WTC11 (cell line): ENCODE measurements at regions of chr5 and their contacts with region 1.

Region 1: GRCh38 chr5:1467768-1468534 is 22.7 kb upstream of the SLC6A3 start:
- DNase-seq: peak; percentile 80
- ATAC-seq: peak; percentile 69
- H3K4me3 Mint-ChIP-seq: no peak overlapping the region
- H3K27ac Mint-ChIP-seq: peak overlapping the region; percentile 91
- H3K4me1 Mint-ChIP-seq: no peaks in the 10 kb centered on the region; the same call in 1 of the 2 replicates
- H3K27me3 Mint-ChIP-seq: no peaks in the 10 kb centered on the region
- CTCF ChIP-seq: peak; percentile 52; the same call in 1 of the 2 replicates

Region 2: GRCh38 chr5:1385395-1386273 is 82.3 kb before region 1 on chr5:
- CTCF ChIA-PET with region 1: interaction called, 27 read pairs
- POLR2A ChIA-PET with region 1: no interaction called
- DNase-seq: peak; percentile 89
- ATAC-seq: peak; percentile 98
- H3K4me3 Mint-ChIP-seq: peak overlapping the region; percentile 86
- H3K27ac Mint-ChIP-seq: peak overlapping the region; percentile 80; the same call in 1 of the 2 replicates
- H3K4me1 Mint-ChIP-seq: peaks cover 15% of the 10 kb centered on the region
- H3K27me3 Mint-ChIP-seq: peaks cover 67% of the 10 kb centered on the region
- CTCF ChIP-seq: no peak

Region 3: GRCh38 chr5:1409381-1410110 is 58.4 kb before region 1 on chr5:
- CTCF ChIA-PET with region 1: interaction called, 12 read pairs
- POLR2A ChIA-PET with region 1: no interaction called
- DNase-seq: peak; percentile 74
- ATAC-seq: peak; percentile 60
- H3K4me3 Mint-ChIP-seq: no peak overlapping the region
- H3K27ac Mint-ChIP-seq: no peak overlapping the region; the same call in 1 of the 2 replicates
- H3K4me1 Mint-ChIP-seq: peaks cover 10% of the 10 kb centered on the region
- H3K27me3 Mint-ChIP-seq: no peaks in the 10 kb centered on the region
- CTCF ChIP-seq: no peak

Region 4: DNA sequence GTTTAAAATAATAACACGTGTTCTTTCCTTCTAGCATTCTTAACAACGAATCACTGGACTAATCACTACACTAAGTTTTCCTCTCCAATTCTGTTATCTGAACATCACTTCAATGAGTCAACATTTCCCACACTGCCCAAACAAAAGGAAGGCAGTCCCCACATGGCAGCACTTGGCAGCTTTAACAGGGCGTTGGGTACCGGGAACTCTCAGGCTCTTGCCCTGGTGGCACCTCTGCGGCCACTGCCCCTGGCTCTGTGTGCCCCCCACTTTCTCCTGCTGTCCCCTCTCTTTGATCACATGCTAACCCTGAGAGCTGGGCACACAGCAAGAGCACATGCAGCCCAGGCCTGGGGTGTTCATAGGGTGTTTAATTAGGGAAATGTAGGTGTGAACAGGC is 38.5 kb before region 1 on chr5:
- CTCF ChIA-PET with region 1: no interaction called
- POLR2A ChIA-PET with region 1: no interaction called
- DNase-seq: no peak
- ATAC-seq: no peak
- H3K4me3 Mint-ChIP-seq: no peak overlapping the region
- H3K27ac Mint-ChIP-seq: no peak overlapping the region
- H3K4me1 Mint-ChIP-seq: no peaks in the 10 kb centered on the region
- H3K27me3 Mint-ChIP-seq: peaks cover 18% of the 10 kb centered on the region
- CTCF ChIP-seq: no peak

Region 5: DNA sequence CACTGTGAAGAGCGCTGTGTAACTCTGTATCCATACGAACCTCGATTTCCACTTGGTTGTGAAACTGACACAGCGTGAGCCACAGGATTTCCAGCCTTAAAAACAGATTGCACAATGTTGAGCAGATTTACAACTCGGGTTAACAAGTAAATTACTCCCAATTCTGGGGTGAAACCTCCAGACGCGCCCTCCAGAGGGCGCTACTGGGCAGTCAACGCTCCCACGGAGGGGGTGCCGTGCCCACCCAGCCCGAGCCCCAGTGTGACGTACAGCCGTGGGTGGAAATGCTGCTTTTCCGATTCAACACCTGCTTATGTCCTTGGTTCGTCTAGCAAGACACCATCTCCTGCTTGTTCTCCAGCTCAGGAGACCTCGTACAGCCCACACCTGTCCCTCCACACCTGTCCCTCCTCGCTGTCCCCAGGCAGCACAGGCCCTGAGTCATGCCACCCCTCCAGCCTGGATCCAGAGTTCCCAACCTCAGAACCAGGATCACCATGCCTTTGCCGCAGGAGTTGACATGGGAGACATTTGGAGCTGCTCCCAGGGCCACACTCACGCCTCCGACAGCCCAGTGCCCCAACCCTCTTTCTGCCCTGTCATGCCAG is 11.7 kb after region 1 on chr5:
- CTCF ChIA-PET with region 1: interaction called, 10 read pairs
- POLR2A ChIA-PET with region 1: no interaction called
- DNase-seq: peak; percentile 65
- ATAC-seq: peak; percentile 61
- H3K4me3 Mint-ChIP-seq: no peak overlapping the region
- H3K27ac Mint-ChIP-seq: peak overlapping the region; percentile 93; the same call in 1 of the 2 replicates
- H3K4me1 Mint-ChIP-seq: peaks cover 5% of the 10 kb centered on the region
- H3K27me3 Mint-ChIP-seq: no peaks in the 10 kb centered on the region
- CTCF ChIP-seq: peak; percentile 72

Region 6: GRCh38 chr5:1737790-1738405 is 269.9 kb after region 1 on chr5:
- CTCF ChIA-PET with region 1: no interaction called
- POLR2A ChIA-PET with region 1: no interaction called
- DNase-seq: no peak
- ATAC-seq: peak; percentile 85
- H3K4me3 Mint-ChIP-seq: no peak overlapping the region
- H3K27ac Mint-ChIP-seq: no peak overlapping the region
- H3K4me1 Mint-ChIP-seq: no peaks in the 10 kb centered on the region
- H3K27me3 Mint-ChIP-seq: peaks cover 4% of the 10 kb centered on the region; the same call in 1 of the 2 replicates
- CTCF ChIP-seq: peak; percentile 63